Calu3 (cell line): ENCODE measurements at regions of chr21 and their contacts with region 1.

Region 1: GRCh38 chr21:15729674-15730483 is at the start of gene USP25:
- DNase-seq: peak; percentile 74
- H3K4me3 Mint-ChIP-seq: peak within 1 kb of the TSS; percentile 77
- H3K27ac Mint-ChIP-seq: peak within 1 kb of the TSS; percentile 77
- H3K4me1 Mint-ChIP-seq: peaks cover 7% of the 10 kb centered on the region
- H3K27me3 Mint-ChIP-seq: no peaks in the 10 kb centered on the region
- CTCF ChIP-seq: no peak
- total RNA-seq, gene USP25: 21.8 and 22.1 TPM in 2 replicates

Region 2: GRCh38 chr21:15400905-15401304 is 329.0 kb before region 1 on chr21:
- CTCF ChIA-PET with region 1: no interaction called
- intact Hi-C with region 1: no loop called
- DNase-seq: no peak
- H3K4me3 Mint-ChIP-seq: no peak overlapping the region
- H3K27ac Mint-ChIP-seq: no peak overlapping the region
- H3K4me1 Mint-ChIP-seq: peaks cover 29% of the 10 kb centered on the region
- H3K27me3 Mint-ChIP-seq: no peaks in the 10 kb centered on the region
- CTCF ChIP-seq: no peak

Region 3: DNA sequence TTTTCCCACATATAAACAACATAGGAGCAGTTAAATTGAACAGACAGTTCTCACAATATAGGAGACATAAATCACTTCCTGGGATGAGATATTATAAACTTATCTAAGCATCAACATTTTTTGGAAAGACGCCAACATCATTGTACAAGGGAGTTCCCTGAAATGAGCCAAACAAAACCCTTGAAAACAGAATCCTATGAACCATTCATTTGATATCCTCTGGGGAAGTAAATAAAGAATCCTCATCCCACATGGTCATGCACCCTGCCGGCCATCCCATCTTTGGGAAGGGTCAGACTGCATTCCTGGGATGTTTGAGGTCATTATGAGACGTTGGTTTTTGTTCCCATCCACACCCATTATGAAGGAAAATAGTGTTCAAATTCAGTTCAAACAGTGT is 111.9 kb before region 1 on chr21:
- CTCF ChIA-PET with region 1: no interaction called
- intact Hi-C with region 1: loop called (anchors 10 kb)
- DNase-seq: no peak
- H3K4me3 Mint-ChIP-seq: no peak overlapping the region
- H3K27ac Mint-ChIP-seq: no peak overlapping the region
- H3K4me1 Mint-ChIP-seq: no peaks in the 10 kb centered on the region
- H3K27me3 Mint-ChIP-seq: no peaks in the 10 kb centered on the region
- CTCF ChIP-seq: no peak

Region 4: DNA sequence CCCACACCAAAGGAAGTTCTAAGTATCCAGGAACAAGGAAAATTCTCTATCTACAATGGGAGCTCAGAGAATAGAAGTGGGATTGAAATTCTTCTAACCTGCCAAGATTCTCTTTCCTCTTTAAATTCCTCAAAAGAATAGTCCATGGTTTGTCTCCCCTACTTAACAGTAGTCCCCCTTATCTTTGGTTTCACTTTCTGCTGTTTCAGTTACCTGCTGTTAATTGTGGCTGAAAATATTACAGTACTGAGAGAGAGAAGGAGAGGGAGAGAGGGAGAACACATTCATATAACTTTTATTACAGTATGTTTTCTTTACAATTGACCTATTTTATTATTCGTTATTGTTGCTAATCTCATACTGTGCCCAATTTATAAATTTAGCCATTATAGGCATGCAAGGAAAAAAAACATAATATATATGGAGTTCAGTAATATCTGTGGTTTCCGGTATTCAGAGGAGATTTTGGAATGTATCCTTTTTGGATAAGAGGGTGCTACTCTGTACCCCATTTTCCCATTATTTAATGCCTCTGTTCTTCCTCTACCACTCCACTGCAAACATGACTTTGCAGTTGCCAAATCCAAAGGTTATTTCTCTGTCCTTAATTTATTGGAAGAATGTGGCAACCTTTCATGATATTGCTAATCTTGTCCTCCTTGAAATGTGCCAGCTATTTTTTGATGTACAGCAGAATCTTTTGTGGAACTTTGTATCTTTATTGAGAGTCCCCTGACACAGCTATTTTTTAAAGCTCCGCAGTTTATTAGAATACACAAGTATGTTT is 67.9 kb after region 1 on chr21:
- CTCF ChIA-PET with region 1: no interaction called
- intact Hi-C with region 1: loop called (anchors 5 kb)
- DNase-seq: no peak
- H3K4me3 Mint-ChIP-seq: no peak overlapping the region
- H3K27ac Mint-ChIP-seq: peak overlapping the region; percentile 35
- H3K4me1 Mint-ChIP-seq: peaks cover 27% of the 10 kb centered on the region
- H3K27me3 Mint-ChIP-seq: no peaks in the 10 kb centered on the region
- CTCF ChIP-seq: no peak

Region 5: DNA sequence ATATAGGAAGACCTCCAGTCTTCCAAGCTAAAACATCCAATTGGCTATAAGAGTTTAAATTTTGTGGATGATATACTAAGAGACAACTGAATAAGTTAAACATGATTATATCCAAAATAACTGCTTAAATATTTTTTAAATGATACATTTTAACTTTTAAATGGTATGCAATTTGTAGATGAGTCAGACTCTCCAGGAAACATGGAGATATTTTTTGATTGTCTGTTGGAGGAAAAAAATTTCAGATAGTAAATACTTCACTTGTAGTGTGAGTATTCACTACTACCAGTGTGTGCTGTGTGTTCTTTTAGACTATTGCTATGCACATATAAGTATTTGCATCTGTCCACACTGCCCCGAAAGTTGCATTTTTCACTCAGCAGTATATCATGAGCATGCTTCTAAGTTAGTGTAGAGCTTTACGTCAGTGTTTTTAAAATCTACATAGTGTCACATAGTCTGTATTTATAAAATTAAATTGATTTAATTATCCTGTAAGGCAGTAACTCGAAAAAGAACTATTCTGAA is 91.0 kb after region 1 on chr21:
- CTCF ChIA-PET with region 1: no interaction called
- intact Hi-C with region 1: loop called (anchors 5 kb)
- DNase-seq: no peak
- H3K4me3 Mint-ChIP-seq: no peak overlapping the region
- H3K27ac Mint-ChIP-seq: no peak overlapping the region
- H3K4me1 Mint-ChIP-seq: no peaks in the 10 kb centered on the region
- H3K27me3 Mint-ChIP-seq: no peaks in the 10 kb centered on the region
- CTCF ChIP-seq: no peak